ENCODE measurements at regions of chr3 and their contacts with region 1.

Region 1: DNA sequence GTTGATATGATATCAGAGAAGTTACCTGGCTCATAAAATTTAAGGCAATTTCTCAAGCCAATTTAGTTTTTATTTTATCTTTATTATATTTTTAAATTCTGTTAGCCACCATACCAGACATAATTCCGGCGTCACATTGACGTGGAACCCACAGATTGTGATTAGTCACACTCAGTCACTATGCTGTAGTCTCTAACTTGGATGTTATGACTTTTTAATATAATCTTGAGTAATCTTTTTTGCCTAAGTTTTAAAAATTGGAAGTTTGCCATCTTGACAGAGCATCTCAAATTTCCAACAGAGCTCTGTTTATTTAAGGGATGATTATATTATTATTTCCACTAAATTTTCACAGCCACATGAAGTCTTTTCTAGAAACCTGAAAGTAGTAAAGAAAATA is 9.7 kb upstream of the DCLK3 start:
- DNase-seq: no peak
- H3K4me3 Mint-ChIP-seq: no peak overlapping the region
- H3K27ac Mint-ChIP-seq: no peak overlapping the region
- H3K4me1 Mint-ChIP-seq: no peaks in the 10 kb centered on the region
- H3K27me3 Mint-ChIP-seq: peaks cover 25% of the 10 kb centered on the region

Region 2: DNA sequence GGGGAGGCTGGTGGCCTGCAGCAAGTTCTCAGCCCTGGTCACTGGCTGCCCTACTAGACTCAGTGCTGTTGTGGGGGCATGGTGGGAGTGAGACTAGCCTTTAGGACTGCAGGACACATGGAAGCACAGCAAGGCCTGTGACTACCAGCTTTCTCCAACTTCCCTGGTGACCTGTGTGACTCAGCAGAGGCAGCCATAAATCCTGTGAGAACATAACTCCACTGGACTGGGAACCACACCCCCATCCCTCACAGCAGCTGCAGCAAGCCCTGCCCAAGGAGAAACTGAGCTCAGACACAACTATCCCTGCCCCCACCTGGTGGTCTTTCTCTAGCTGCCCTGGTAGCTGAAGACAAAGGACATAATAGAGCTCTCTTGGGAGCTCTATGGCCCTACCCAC is 121.0 kb before region 1 on chr3:
- intact Hi-C with region 1: no loop called
- DNase-seq: no peak
- H3K4me3 Mint-ChIP-seq: no peak overlapping the region
- H3K27ac Mint-ChIP-seq: no peak overlapping the region
- H3K4me1 Mint-ChIP-seq: no peaks in the 10 kb centered on the region
- H3K27me3 Mint-ChIP-seq: peaks cover 7% of the 10 kb centered on the region

Region 3: DNA sequence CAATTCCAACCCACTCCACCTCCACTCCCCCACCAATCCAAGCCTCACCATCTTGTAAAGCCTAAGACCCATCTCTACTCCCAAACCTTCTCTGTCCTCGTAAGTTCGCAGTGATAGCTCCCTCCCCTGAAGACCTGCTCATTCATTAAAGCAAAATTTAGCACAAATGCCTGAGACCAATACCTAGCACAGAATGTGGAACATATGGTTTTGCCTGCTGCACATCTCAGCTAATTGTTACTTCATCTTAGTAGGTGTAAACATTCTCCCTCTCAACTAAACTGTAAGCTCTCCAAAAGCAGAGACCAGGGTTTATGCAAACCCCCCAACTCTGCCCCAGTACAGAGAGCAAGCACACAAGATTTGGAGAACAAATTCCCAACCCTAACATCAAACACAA is 30.2 kb before region 1 on chr3:
- intact Hi-C with region 1: loop called (anchors 2 kb)
- DNase-seq: no peak
- H3K4me3 Mint-ChIP-seq: no peak overlapping the region
- H3K27ac Mint-ChIP-seq: no peak overlapping the region
- H3K4me1 Mint-ChIP-seq: no peaks in the 10 kb centered on the region
- H3K27me3 Mint-ChIP-seq: peaks cover 10% of the 10 kb centered on the region

Region 4: DNA sequence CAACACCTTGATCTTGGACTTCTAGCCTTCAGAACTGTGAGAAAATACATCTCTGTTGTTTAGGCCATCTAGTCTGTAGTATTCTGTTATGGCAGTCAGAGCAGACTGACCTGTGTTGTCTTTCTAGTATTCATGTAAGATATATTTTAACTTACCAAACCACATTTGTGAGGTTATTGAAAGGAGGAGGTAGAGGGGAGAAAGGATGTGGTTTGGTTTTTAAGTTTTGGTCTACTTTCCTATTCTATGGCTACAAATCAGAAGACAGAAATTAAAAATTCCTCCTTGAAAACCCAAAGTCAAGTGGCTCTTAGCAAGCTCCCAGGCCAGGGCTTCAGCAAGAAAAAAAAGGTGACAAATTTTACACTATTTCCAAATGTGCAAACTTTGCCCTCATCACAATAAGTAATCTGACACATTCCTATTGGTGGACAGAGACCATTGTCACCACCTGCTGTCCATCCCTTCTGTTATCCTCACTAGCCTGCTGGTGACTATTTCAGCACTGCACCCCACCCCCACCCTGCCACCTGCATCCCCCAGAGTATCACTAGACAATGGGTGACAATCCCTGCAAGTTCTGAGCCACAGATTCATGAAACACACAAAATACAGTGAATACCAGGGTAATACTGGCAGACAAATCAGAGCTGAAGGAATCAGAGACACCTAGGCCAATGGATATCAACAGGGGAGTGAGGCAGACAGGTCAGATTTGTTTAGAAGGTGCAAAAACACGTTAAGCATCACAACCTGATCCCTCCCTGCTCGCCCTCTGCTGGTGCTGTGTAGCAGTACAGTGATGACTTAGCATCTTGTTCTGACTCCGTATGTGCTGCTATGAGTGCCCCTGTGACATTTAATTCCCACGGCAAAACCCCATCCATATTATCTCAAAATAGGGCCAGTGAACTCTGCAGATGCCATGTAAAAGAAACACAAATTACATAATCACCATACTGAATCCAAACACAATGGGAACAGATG is 69.3 kb after region 1 on chr3:
- intact Hi-C with region 1: no loop called
- DNase-seq: peak; percentile 28
- H3K4me3 Mint-ChIP-seq: peak overlapping the region; percentile 3
- H3K27ac Mint-ChIP-seq: no peak overlapping the region
- H3K4me1 Mint-ChIP-seq: peaks cover 20% of the 10 kb centered on the region
- H3K27me3 Mint-ChIP-seq: no peaks in the 10 kb centered on the region

Measured in activated T-helper 1 cell treated with anti-CD3 and anti-CD28 coated beads, Interleukin-12 subunit alpha, Interleukin-12 subunit beta, Interleukin-2, Interleukin-4 antibody, amounts not matched to agents 30 ng/mL and 10 ng/mL and 1 ng/mL, durations not matched to agents 14 hours and 24 hours and 36 hours (primary cell).